Mammary epithelial cell (primary cell): ENCODE measurements at regions of chrX and their contacts with region 1.

Region 1: DNA sequence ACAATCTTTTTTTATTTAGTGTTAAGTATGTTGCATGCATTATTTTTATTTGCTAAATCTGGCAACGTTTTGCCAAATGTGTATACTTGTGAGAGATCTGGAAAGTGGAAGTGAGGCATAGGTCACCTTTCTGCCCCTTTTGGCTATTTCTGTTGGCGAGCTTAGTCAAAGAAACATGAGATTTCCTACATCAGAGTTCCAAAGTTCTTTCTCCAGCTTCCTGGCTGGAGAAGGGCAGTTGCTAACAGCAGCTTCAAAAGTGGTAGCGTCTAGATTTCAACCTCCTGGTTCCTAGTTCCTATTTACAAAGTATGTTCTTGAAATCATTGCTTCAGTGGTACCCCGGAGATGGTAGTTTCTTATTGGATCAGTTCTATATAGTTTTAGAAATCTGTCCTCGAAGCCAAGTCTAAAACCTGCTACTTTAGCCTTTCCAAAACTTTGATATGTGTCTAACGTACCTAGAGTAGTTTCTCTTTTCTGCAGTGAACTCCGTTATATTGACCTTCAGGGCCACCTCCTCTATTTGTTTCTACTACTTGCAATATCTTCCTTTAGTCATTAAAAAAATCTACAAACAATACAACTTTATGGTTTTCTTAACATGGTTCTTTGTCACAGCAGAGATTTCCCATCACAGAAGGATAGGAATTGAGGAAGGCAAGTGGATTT is 455.8 kb upstream of the FTHL17 start:
- DNase-seq: no peak
- H3K4me3 ChIP-seq: no peak overlapping the region
- H3K27ac ChIP-seq: no peak overlapping the region
- H3K4me1 ChIP-seq: no peaks in the 10 kb centered on the region
- H3K27me3 ChIP-seq: peaks cover 9% of the 10 kb centered on the region
- CTCF ChIP-seq: no peak

Region 2: DNA sequence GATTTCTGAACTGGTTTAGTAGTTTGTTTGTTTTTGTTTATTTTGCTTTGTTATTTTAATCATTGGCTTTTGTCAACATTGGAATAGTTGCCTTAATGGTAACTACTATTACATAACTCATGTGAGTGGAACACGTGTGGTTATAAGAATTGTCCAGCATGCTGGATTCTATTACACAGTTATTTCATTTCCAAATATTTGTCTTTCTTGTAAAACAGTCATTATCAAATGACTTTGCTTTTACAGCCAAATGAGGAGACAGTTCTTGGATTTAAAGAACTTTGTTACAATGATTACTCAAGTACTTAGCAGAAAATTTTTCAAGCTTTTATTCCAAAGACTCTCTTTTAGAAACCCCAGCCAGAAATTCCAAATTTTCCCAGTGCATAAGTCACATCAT is 1828.4 kb before region 1 on chrX:
- CTCF ChIA-PET with region 1: interaction called, 14 read pairs
- dilution Hi-C with region 1: no loop called
- in situ Hi-C with region 1: no loop called
- intact Hi-C with region 1: no loop called
- DNase-seq: no peak
- H3K4me3 ChIP-seq: no peak overlapping the region
- H3K27ac ChIP-seq: no peak overlapping the region
- H3K4me1 ChIP-seq: no peaks in the 10 kb centered on the region
- H3K27me3 ChIP-seq: no peaks in the 10 kb centered on the region
- CTCF ChIP-seq: no peak